WTC11 (cell line): ENCODE measurements at regions of chr17 and their contacts with region 1.

Region 1: DNA sequence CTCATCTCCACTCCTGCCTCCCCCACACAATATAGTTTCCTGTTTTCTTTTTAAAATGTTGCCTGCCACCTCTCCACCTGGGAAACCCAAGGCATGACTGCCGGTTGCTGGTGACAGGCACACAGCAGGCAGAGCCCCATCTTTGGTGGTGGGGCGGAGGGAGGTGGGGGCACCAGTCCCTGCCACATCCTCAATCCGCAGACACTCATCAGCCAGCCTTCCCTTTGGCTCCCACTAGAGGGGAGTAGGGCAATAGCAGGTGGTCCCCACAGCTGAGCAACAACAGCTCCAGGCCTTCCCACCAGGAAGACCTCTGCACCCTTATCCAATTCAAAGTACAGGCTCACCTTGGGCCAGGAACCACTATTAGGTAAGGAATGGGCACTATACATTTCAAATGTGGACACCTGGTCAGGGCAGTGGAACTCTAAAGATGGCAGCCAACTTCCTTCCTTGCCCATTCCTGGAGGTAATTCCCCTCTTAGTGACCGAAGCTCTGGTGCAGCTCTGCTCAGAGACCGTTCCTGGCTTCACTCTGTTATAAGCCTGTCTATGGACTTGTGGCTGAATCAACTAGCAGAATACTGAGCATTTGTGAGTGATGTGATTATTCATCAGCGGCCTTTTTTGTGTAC is 13.9 kb downstream of the RECQL5 start:
- DNase-seq: peak; percentile 76
- ATAC-seq: peak; percentile 99
- H3K4me3 Mint-ChIP-seq: no peak overlapping the region
- H3K27ac Mint-ChIP-seq: peak overlapping the region; percentile 71; the same call in 1 of the 2 replicates
- H3K4me1 Mint-ChIP-seq: no peaks in the 10 kb centered on the region
- H3K27me3 Mint-ChIP-seq: no peaks in the 10 kb centered on the region
- CTCF ChIP-seq: peak; percentile 66; the same call in 1 of the 2 replicates

Region 2: DNA sequence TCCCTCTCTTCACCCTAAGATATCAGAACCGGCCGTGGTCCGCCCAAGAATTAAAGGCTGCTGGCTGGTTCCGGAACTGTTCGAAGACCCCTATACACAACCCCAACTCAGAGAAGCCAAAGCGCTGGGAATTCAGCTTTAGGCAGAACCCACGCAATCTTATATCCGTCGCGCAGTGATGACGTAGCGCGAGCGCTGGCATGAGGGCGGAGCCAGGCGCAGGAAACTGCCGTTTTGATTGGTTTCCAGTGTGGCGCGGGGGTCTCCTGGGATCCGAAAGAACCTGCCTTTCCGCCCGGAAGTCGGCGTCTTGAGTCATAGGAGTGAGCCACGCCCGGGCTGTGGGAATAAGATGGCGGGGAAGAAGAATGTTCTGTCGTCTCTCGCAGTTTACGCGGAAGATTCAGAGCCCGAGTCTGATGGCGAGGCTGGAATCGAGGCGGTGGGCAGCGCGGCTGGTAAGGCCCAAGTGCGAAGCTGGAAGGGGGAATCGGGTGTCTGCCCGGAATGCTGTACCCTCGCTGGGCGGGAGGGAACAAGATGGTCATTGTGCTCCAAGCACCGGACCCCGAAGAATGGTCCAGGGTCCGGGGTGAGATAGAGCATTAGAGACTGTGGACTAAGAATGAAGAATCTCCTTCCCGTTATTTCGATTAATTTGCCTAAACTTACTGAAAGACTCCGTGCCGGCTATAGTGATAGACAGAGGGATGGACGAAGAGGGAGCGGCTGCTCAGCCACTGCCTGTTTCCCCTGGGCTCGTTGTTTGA is 14.2 kb after region 1 on chr17 and contains the starts of genes RECQL5 and SAP30BP:
- CTCF ChIA-PET with region 1: interaction called, 13 read pairs
- POLR2A ChIA-PET with region 1: no interaction called
- DNase-seq: peak; percentile 96
- ATAC-seq: peak; percentile 100
- H3K4me3 Mint-ChIP-seq: no peak within 1 kb of the TSS
- H3K27ac Mint-ChIP-seq: peak within 1 kb of the TSS; percentile 65; the same call in 1 of the 2 replicates
- H3K4me1 Mint-ChIP-seq: peaks cover 12% of the 10 kb centered on the region
- H3K27me3 Mint-ChIP-seq: no peaks in the 10 kb centered on the region
- CTCF ChIP-seq: no peak
- total RNA-seq, gene RECQL5: 48.9 to 53.1 TPM (median 51.0 TPM) in 3 replicates
- total RNA-seq, gene SAP30BP: 67.5 to 86.8 TPM (median 72.0 TPM) in 3 replicates